Right ventricle myocardium superior (tissue), 1 donor: ENCODE measurements at regions of chr4 and their contacts with region 1.

Region 1: GRCh38 chr4:145154573-145154972 is 25.8 kb downstream of the OTUD4 start:
- DNase-seq: no peak
- ATAC-seq: peak; percentile 88

Region 2: DNA sequence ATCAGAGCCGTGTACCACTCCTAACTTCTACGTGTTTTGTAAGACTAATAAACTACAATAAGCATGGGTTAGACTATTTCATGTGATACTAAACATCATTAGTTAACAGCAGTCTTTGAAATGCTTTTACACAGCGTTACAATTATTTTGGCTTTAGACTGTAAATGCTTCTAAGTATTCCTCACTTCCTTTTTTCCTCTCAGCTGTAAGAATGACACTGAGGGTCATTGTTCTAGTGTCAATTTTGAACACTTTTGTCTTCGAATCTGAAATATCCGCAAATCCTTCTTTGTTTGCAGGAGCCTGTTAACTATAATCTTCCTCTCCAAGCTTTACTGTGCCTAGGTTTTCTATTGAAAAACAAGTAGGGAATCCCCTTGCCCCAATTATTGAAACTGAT is 54.9 kb before region 1 on chr4:
- intact Hi-C with region 1: loop called (anchors 10 kb)
- DNase-seq: no peak
- ATAC-seq: no peak

Region 3: DNA sequence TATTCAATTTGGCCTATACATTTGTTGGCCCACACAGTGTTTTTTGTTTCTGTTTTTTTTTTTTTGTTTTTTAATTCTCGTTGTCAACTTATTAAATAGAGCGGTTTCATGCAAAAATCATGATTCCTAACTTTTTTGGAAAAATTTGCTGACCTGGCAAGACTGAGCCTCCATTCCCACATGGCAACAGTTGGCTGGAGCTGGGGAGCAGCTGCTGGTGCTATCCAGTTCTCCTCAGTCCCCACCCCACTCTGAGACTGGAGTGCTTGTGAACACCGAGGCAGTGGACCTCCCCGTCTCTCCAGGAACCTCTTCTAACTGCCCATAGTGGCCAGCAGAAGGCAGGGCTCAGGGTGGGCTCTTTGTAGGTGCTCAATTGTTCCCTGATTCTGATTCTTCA is 121.5 kb after region 1 on chr4:
- intact Hi-C with region 1: no loop called
- DNase-seq: no peak
- ATAC-seq: no peak

Region 4: GRCh38 chr4:145609481-145610427 is 455.2 kb after region 1 on chr4:
- intact Hi-C with region 1: loop called (anchors 10 kb)
- DNase-seq: peak; percentile 56
- ATAC-seq: peak; percentile 63